Transverse colon (tissue), 4 donors: ENCODE measurements at regions of chr6 and their contacts with region 1.

Region 1: DNA sequence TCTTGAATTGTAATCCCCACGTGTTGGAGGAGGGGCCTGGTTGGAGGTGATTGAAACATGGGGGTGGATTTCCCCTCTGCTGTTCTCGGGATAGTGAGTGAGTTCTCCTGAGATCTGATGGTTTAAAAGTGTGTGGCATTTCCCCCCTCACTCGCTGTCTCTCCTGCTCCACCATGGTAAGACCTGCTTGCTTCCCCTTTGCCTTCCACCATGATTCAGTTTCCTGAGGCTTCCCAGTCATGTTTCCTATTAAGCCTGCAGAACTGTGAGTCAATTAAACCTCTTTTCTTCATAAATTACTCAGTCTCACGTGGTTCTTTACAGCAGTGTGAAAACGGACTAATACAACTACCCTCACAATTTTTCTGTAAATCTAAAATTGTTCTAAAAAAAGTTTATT is 26.8 kb upstream of the FAM184A start:
- DNase-seq: no peak
- H3K4me3 ChIP-seq: no peak overlapping the region
- H3K27ac ChIP-seq: no peak overlapping the region
- H3K4me1 ChIP-seq: peaks cover 0 to under 1% (median 0%) of the 10 kb centered on the region in 4 donors
- H3K27me3 ChIP-seq: no peaks in the 10 kb centered on the region
- CTCF ChIP-seq: no peak
- EP300 ChIP-seq: no peak
- POLR2A ChIP-seq: no peak

Region 2: GRCh38 chr6:118800394-118801071 is 304.7 kb before region 1 on chr6:
- in situ Hi-C with region 1: loop called in 1 of 4 experiments (anchors 10 kb)
- intact Hi-C with region 1: no loop called
- DNase-seq: peak; percentile 80
- H3K4me3 ChIP-seq: no peak overlapping the region
- H3K27ac ChIP-seq: no peak overlapping the region
- H3K4me1 ChIP-seq: peaks cover 4 to 10% (median 8%) of the 10 kb centered on the region in 4 donors
- H3K27me3 ChIP-seq: no peaks in the 10 kb centered on the region
- CTCF ChIP-seq: peak; percentile 76 to 89 (median 86)
- EP300 ChIP-seq: no peak
- POLR2A ChIP-seq: no peak

Region 3: DNA sequence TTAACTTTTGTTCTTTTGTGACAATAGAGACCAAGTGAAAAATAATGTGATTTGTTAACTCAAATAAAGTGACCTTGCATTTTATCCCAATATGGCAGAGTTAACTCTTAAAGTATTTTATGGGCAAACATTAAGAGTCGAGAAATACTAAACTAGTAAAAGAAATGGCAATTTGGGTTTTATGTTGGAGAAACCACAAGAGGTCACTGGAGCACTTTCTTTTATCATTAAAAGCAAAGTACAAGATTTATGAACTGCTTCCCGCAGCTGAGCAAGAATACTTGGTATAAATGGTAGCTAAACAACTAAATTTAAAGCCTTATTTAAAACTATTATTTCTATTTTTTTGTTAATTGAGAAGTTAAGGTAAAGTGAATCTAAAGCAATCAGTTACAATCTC is 136.9 kb before region 1 on chr6:
- in situ Hi-C with region 1: loop called (anchors 10 kb)
- intact Hi-C with region 1: loop called (anchors 5 kb)
- DNase-seq: no peak
- H3K4me3 ChIP-seq: no peak overlapping the region
- H3K27ac ChIP-seq: no peak overlapping the region
- H3K4me1 ChIP-seq: no peaks in the 10 kb centered on the region
- H3K27me3 ChIP-seq: no peaks in the 10 kb centered on the region
- CTCF ChIP-seq: peak in 4 of 5 experiments; percentile 26 to 42 (median 34)
- EP300 ChIP-seq: no peak
- POLR2A ChIP-seq: no peak